HEK293T (cell line): ENCODE measurements at regions of chr19 and their contacts with region 1.

Region 1: DNA sequence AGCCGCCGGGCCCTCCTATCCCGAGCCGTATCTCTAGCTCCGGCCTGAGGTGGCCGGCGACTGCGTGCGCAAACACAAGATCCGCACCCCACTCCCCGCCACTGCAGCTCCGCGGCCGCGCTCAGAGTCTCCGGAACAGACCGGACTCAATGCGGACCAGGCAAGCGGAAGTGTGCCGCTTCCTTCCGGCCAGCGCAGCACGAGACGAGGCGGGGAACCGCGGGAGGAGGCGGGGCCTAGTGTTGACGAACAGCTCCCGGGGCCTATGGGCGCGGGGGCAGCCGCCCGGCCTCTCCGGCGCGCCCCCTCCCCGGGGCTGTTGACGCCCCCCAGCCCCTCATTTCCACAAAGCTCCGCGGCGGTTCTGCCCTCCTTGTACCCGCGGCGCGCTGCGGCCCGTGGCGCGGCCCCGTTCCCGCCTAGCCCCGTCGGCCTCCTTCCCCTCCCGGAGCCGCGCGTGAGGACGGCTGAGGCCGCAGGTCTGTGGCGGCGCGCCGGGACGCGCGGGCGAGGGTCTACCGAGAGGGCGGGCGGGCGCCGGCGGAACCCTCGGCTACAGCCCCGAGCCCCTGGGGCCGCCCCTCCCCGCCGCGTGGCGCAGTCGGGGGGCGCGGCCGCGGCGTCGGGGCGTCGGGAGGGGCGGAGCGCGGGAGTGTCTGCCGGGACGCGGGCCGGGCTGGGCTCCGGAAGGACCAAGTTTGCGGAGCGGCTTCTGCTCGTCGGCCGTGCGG is at the start of gene DPY19L3:
- DNase-seq: peak; percentile 96

Region 2: DNA sequence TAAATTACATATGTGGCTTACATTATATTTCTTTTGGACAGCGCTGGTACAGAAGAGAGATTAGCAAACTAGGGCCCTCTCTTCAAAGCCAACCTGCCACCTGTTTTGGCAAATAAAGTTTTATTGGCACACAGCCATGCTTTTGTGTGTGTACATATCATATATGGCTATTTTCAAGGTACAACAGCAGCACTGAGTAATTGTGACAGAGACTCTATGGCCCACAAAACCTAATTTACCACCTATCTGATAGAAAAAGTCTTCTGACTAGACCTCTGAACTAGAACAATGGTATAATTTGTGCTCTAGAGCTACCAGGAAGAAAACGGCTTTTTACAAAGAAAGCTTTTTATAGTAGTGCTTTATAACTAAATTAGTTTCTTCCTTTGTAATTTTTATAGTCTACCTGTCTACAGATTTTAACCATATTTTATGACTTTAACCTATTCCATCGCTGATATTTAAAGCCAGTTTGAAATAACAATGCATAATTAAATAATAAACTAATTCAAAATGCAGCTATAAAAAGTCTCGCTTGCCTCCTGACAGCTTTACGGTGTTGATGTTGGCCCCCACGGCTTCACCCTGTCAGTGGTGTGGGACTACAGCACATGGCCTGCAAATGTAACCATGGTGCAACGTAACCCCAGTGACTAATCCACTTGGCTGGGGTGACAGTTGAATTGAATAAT is 17.7 kb before region 1 on chr19:
- CTCF ChIA-PET with region 1: no interaction called
- POLR2A ChIA-PET with region 1: interaction called, 18 read pairs
- DNase-seq: no peak

Region 3: DNA sequence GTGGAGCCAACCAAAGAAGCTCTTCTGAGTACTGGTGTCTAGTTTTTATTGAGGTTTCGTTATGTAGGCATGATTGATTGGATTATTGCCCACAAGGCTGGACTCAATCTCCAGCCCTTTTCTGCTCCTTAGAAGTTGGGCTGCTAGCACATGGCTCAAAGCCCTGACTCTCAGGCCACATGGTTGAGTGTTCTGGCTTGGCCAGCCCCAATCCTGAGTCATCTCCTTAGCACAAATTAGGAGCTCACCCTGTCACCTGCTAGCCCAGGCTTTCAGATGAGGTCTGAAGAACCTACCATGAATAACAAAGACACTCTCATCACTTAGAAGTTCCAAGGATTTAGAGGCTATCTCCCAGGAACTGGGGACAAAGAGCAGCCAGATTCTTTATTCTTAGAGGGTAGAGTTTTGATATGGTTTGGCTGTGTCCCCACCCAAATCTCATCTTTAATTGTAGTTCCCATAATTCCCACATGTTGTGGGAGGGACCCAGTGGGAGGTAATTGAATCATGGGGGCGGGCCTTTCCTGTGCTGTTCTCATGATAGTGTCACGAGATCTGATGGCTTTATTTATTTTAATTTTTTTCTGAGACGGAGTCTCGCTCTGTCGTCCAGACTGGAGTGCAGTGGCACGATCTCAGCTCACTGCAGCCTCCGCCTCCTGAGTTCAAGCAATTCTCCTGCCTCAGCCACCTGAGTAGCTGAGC is 11.3 kb after region 1 on chr19:
- CTCF ChIA-PET with region 1: no interaction called
- POLR2A ChIA-PET with region 1: interaction called, 13 read pairs
- DNase-seq: no peak

Region 4: DNA sequence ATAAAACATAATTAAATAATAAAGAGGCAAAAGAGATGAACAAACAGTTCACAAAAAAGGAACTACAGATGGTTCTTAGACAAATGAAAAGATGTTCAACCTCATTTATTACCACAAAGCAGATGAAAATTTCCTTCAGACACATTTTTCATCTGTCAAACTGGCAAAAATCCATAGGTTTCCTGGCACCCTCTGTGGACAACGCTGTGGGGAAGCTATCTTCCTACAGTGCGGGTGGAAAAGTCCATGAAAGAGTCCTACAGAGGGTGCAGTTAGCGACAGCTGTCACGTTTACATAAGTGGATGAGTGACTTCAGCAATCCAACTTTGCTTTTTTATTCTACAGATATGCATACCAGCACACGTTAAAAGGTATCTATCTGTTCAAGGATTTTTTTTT is 145.1 kb after region 1 on chr19:
- CTCF ChIA-PET with region 1: no interaction called
- POLR2A ChIA-PET with region 1: no interaction called
- DNase-seq: no peak